Thyroid gland (tissue), 4 donors: ENCODE measurements at regions of chr1 and their contacts with region 1.

Region 1: DNA sequence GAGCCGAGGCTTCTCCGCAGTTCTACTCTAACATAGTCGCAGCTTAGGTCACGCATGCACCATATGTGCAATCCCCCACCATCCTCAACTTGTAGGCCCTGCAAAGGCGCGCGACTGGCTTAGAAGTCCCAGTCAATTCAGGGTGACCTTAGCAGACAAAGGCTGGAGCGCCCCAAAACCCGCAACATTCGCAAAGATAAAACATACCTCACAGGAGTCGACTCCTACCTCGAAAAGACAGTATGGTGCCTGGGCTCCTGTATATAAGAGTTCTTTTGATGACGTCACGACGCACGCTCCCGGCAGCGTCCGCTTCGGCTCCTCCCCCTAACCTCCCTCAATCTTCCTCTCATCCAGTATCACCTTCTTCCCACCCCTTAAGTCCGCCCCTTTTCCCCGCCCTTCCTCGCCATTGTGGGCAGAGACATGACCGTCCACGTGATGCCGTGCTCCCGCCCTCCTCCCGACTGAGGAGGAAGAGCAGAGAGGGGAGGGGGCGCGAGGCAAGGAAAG is at the start of gene GAS5:
- DNase-seq: peak; percentile 100
- H3K4me3 ChIP-seq: peak within 1 kb of the TSS; percentile 37 to 64 (median 60)
- H3K27ac ChIP-seq: peak within 1 kb of the TSS; percentile 88 to 97 (median 88)
- H3K4me1 ChIP-seq: peaks cover 18 to 20% of the 10 kb centered on the region in 2 donors
- H3K27me3 ChIP-seq: no peaks in the 10 kb centered on the region
- CTCF ChIP-seq: peak in 1 of 6 experiments; percentile 26
- POLR2A ChIP-seq: peak; percentile 88 to 99
- total RNA-seq, gene GAS5: 162 to 625 (median 223) TPM

Region 2: DNA sequence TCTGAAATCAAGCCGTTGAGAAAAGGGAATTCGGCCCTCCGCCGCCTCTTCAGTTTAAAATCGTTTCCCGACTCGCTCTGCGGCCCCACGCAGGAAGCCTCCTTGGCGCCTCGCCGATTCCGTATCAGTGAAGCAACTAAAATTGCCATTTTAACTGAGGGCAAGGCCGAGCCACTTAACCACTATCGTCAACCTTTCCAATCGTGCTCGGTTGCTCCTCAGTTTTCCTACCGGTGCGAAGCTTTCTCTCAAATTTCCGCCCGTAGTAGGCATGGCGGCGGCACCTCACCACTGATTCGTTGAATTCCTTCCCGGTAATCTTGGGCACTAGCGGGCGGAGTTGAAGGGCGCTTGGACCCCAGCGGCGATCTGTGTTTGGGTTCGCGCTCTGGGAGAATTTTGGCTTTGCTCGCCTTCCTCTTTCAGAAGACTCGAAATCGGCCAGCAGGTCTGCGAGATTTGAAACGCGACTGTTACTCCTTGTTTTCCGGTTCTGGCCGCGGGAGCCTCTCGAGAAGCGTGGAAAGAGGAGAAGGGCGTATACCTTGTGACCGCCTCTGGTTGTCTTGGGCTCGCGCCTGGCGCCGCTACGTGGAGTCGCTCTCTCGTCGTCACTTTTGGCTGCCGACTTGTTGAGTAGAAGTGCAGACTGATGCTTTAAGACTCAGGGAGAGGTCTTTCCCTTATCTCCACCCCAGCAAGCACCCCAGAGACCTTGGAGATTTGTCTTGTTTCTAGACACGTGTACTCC is 43.3 kb before region 1 on chr1 and contains the starts of genes CENPL and DARS2:
- intact Hi-C with region 1: loop called (anchors 5 kb)
- DNase-seq: peak; percentile 97 to 99
- H3K4me3 ChIP-seq: peak within 1 kb of the TSS; percentile 26 to 84 (median 49)
- H3K27ac ChIP-seq: peak within 1 kb of the TSS; percentile 66 to 95 (median 80)
- H3K4me1 ChIP-seq: peaks cover 5 to 10% of the 10 kb centered on the region in 2 donors
- H3K27me3 ChIP-seq: no peaks in the 10 kb centered on the region
- CTCF ChIP-seq: no peak
- POLR2A ChIP-seq: peak in 1 of 2 donors; percentile 58
- total RNA-seq, gene CENPL: 4.4 to 8.1 (median 5.3) TPM
- total RNA-seq, gene DARS2: 14.9 to 26.9 (median 20.7) TPM

Region 3: DNA sequence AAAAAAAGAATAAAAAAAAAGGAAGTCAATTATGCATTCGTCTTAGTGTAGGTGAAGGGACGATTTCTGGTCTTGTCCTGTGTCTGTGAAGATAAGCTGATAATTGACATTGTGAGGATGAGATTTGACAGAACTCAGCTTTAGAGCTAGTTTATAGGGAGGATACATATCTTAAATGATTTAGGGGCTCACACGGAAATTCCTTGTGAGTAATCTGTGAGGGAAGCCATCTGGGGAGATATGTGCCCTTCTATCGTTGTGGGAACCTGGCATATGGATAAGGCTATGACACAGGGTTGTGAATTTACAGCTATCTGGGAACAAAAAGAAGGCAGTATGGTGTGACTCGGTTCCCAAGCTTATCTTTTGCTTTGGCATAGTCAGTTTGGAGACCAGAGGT is 362.6 kb after region 1 on chr1:
- intact Hi-C with region 1: no loop called
- DNase-seq: no peak
- H3K4me3 ChIP-seq: no peak overlapping the region
- H3K27ac ChIP-seq: no peak overlapping the region
- H3K4me1 ChIP-seq: peaks cover 7 to 9% of the 10 kb centered on the region in 2 donors
- H3K27me3 ChIP-seq: no peaks in the 10 kb centered on the region
- CTCF ChIP-seq: no peak
- POLR2A ChIP-seq: no peak